ENCODE measurements at regions of chr2 and their contacts with region 1.

Region 1: GRCh38 chr2:181070119-181070835 is 89.9 kb downstream of the UBE2E3 start:
- DNase-seq: peak; percentile 73
- H3K4me3 ChIP-seq: no peak overlapping the region
- H3K27ac ChIP-seq: no peak overlapping the region
- H3K4me1 ChIP-seq: peaks cover 47% of the 10 kb centered on the region
- H3K27me3 ChIP-seq: no peaks in the 10 kb centered on the region
- CTCF ChIP-seq: no peak
- POLR2A ChIP-seq: no peak

Region 2: DNA sequence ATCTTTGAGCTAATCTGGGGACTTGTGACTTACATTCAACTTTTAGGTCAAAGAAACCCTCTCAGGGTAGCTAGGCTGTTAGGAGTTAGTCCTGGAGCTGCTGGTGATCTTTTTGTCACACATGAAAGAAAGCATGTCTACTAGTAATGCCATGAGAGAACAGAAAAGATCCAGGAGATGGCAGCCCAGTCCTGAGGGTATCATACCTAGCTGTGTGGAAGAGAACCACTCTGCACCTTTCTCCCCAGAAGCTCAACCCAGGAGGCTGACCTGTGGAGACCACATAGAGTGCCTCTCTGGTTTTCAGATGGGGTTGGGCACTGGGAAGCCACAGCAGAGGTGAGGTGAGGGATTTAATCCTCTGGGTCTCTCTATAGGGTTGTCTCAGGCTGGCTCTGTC is 550.1 kb before region 1 on chr2:
- CTCF ChIA-PET with region 1: no interaction called
- POLR2A ChIA-PET with region 1: no interaction called
- dilution Hi-C with region 1: no loop called
- intact Hi-C with region 1: loop called (anchors 5 kb)
- DNase-seq: peak; percentile 21
- H3K4me3 ChIP-seq: no peak overlapping the region
- H3K27ac ChIP-seq: no peak overlapping the region
- H3K4me1 ChIP-seq: peaks cover 40% of the 10 kb centered on the region
- H3K27me3 ChIP-seq: no peaks in the 10 kb centered on the region
- CTCF ChIP-seq: no peak
- POLR2A ChIP-seq: no peak

Region 3: GRCh38 chr2:180761224-180761623 is 309.1 kb before region 1 on chr2:
- CTCF ChIA-PET with region 1: no interaction called
- POLR2A ChIA-PET with region 1: no interaction called
- dilution Hi-C with region 1: no loop called
- intact Hi-C with region 1: loop called (anchors 1 kb)
- DNase-seq: peak; percentile 56
- H3K4me3 ChIP-seq: no peak overlapping the region
- H3K27ac ChIP-seq: no peak overlapping the region
- H3K4me1 ChIP-seq: peaks cover 7% of the 10 kb centered on the region
- H3K27me3 ChIP-seq: no peaks in the 10 kb centered on the region
- CTCF ChIP-seq: no peak
- POLR2A ChIP-seq: no peak

Region 4: GRCh38 chr2:180999274-180999964 is 70.9 kb before region 1 on chr2:
- CTCF ChIA-PET with region 1: no interaction called
- POLR2A ChIA-PET with region 1: no interaction called
- dilution Hi-C with region 1: no loop called
- intact Hi-C with region 1: no loop called
- DNase-seq: no peak
- H3K4me3 ChIP-seq: no peak overlapping the region
- H3K27ac ChIP-seq: no peak overlapping the region
- H3K4me1 ChIP-seq: no peaks in the 10 kb centered on the region
- H3K27me3 ChIP-seq: no peaks in the 10 kb centered on the region
- CTCF ChIP-seq: no peak
- POLR2A ChIP-seq: no peak

Region 5: DNA sequence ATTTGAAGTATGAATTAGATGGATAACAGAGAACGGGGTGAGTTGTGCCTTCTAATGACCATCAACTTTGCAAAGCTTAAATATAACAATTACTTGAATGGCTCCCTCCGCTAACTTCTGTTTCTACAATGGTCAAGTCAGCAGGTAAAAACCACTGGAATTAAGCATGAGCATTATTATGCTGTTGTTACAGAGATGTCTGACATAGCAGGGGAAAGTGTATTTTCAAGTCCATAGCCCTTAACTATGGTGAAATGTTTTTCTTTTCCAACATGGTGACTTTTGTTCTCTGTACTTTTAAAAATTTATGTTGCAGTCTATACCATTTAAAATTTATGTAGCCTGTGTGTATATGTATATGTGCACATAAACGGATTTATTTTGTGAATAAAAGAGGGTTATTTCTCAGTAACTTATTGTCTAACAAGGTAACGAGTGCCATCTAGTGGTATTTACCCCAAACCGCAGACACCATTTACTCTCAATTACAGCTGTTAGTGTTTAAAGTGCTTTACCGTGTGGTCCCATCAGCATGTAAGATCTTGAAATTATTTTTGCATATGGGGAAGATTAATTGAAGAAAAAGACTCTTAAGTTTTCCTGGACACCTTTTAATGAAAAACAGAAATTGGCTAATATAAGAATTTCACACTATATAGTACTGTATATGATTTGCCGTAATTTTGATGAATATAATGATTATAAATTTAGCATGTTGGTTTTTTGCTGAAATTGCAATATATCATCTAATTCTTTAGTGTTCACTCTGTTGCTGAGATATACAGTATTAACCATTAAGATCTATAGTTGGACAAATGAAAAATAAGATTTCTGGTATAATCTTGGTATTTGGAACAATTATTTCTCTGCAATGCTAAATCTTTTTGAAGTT is 11.7 kb before region 1 on chr2:
- CTCF ChIA-PET with region 1: interaction called, 25 read pairs
- POLR2A ChIA-PET with region 1: no interaction called
- dilution Hi-C with region 1: no loop called
- intact Hi-C with region 1: no loop called
- DNase-seq: peak; percentile 53
- H3K4me3 ChIP-seq: no peak overlapping the region
- H3K27ac ChIP-seq: no peak overlapping the region
- H3K4me1 ChIP-seq: no peaks in the 10 kb centered on the region
- H3K27me3 ChIP-seq: no peaks in the 10 kb centered on the region
- CTCF ChIP-seq: peak; percentile 35 to 43
- POLR2A ChIP-seq: no peak

Measured in endothelial cell of umbilical vein (primary cell).